Mammary epithelial cell (primary cell): ENCODE measurements at regions of chr1 and their contacts with region 1.

Region 1: GRCh38 chr1:56357927-56358690 is 221.3 kb downstream of the PLPP3 start:
- DNase-seq: peak; percentile 6
- H3K4me3 ChIP-seq: no peak overlapping the region
- H3K27ac ChIP-seq: no peak overlapping the region
- H3K4me1 ChIP-seq: no peaks in the 10 kb centered on the region
- H3K27me3 ChIP-seq: no peaks in the 10 kb centered on the region
- CTCF ChIP-seq: no peak

Region 2: DNA sequence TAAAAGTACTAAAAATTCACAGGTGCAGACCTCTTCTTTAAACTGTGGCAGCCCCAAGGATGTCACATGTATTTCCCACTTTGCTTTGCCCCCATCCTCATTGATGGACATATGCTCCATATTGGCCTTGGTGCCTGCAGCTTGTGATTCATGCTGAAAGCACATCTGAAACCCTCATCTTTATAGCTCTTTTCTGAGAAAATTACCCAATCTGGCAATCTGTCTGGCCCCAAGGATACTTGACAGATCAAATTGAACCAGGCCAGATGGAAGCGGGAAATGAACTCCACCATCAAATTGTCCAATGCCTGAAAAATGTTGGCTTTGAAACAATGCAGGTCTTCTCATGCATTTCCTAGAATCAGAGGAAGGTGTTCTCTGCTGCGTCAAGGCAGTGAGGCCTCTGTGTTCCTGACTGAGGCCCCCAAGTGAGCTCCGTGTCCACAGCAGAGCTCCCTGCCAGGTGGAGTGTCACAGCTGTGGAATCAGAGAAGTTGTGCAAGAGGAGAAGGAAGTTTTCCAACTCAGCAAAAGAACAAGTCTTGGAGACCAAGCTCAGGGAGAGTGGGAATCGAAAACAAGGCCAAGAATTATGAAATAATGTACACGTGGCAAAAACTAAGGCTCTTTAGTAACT is 102.5 kb before region 1 on chr1:
- CTCF ChIA-PET with region 1: no interaction called
- dilution Hi-C with region 1: loop called (anchors 5 kb)
- in situ Hi-C with region 1: no loop called
- intact Hi-C with region 1: no loop called
- DNase-seq: no peak
- H3K4me3 ChIP-seq: no peak overlapping the region
- H3K27ac ChIP-seq: no peak overlapping the region
- H3K4me1 ChIP-seq: no peaks in the 10 kb centered on the region
- H3K27me3 ChIP-seq: no peaks in the 10 kb centered on the region
- CTCF ChIP-seq: no peak